Heart right ventricle (tissue), 16 donors: ENCODE measurements at regions of chr1 and their contacts with region 1.

Region 1: GRCh38 chr1:94463765-94464330 is 45.7 kb downstream of the ABCD3 start:
- DNase-seq: peak in 1 of 2 donors; percentile 19
- ATAC-seq: peak; percentile 65 to 82 (median 70)
- H3K4me3 ChIP-seq: no peak overlapping the region
- H3K27ac ChIP-seq: no peak overlapping the region
- H3K4me1 ChIP-seq: peaks cover 0 to 15% (median 10%) of the 10 kb centered on the region in 9 donors
- H3K27me3 ChIP-seq: no peaks in the 10 kb centered on the region
- CTCF ChIP-seq: peak; percentile 22 to 71 (median 57)

Region 2: GRCh38 chr1:94025383-94026340 is 438.2 kb before region 1 on chr1:
- intact Hi-C with region 1: loop called in 3 of 10 experiments (anchors 10 kb)
- DNase-seq: peak in 1 of 2 donors; percentile 58
- ATAC-seq: peak in 5 of 8 donors; percentile 39 to 72 (median 56)
- H3K4me3 ChIP-seq: peak overlapping the region in 1 of 10 donors; percentile 8
- H3K27ac ChIP-seq: peak overlapping the region in 1 of 10 donors; percentile 11
- H3K4me1 ChIP-seq: peaks cover 0 to 34% (median 8%) of the 10 kb centered on the region in 9 donors
- H3K27me3 ChIP-seq: no peaks in the 10 kb centered on the region
- CTCF ChIP-seq: peak; percentile 70 to 90 (median 81)

Region 3: DNA sequence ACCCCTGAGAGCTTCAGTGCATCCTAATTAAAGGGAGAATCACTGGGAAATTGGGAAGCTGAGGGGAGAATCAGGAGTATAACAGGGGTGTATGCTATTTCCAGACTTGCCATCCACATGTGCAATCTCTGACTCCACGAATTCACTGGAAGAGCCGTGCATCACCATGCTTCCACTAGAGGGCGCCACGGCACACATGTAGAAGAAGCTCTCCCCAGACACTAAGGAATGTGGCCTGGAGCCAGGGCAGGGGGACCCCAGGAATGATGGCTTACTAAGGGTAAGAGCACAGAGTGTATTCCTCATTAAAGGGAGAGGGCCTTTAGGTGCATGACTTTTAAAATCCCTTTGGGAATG is 424.4 kb before region 1 on chr1:
- intact Hi-C with region 1: loop called in 1 of 10 experiments (anchors 10 kb)
- DNase-seq: peak; percentile 73 to 76
- ATAC-seq: peak in 7 of 8 donors; percentile 17 to 58 (median 33)
- H3K4me3 ChIP-seq: no peak overlapping the region
- H3K27ac ChIP-seq: peak overlapping the region; percentile 19 to 83 (median 74)
- H3K4me1 ChIP-seq: peaks cover 3 to 58% (median 42%) of the 10 kb centered on the region in 9 donors
- H3K27me3 ChIP-seq: peaks cover 0 to 18% (median 0%) of the 10 kb centered on the region in 7 donors
- CTCF ChIP-seq: peak; percentile 72 to 95 (median 85)

Region 4: GRCh38 chr1:94335950-94336349 is 127.9 kb before region 1 on chr1:
- intact Hi-C with region 1: loop called in 6 of 10 experiments (anchors 5 to 10 kb)
- DNase-seq: peak; percentile 18 to 86
- ATAC-seq: peak; percentile 73 to 94 (median 90)
- H3K4me3 ChIP-seq: peak overlapping the region in 1 of 10 donors; percentile 14
- H3K27ac ChIP-seq: peak overlapping the region in 5 of 10 donors; percentile 7 to 77 (median 69)
- H3K4me1 ChIP-seq: peaks cover 0 to 30% (median 16%) of the 10 kb centered on the region in 9 donors
- H3K27me3 ChIP-seq: no peaks in the 10 kb centered on the region
- CTCF ChIP-seq: peak; percentile 75 to 99 (median 88)

Region 5: DNA sequence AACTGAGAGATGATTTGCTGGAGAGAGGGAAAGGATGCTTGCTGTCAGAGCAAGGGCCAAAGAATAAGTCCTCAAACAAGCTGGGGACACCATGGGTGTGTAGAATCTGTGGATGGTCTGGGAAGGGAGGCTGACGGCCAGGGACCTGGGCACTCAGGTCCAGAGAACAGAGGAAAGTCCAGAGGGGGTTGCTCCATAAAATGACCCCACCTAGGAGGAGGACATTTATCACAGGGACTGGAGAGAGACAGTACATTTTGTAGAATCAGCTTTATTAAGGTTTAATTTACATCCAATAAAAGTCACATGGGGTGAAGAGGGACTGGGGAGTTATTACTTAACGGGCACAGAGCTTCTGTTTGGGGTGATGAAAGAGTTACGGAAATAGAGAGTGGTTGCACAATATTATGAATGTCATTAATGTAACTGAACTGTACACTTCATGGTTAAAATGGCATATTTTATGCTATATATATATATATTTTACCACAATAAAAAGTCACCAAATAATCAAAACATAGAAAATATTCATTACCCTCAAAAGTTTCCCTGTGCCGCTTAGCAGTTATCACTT is 118.6 kb before region 1 on chr1:
- intact Hi-C with region 1: loop called in 3 of 10 experiments (anchors 5 to 10 kb)
- DNase-seq: no peak
- ATAC-seq: no peak
- H3K4me3 ChIP-seq: no peak overlapping the region
- H3K27ac ChIP-seq: no peak overlapping the region
- H3K4me1 ChIP-seq: peaks cover 0 to 3% (median 0%) of the 10 kb centered on the region in 9 donors
- H3K27me3 ChIP-seq: no peaks in the 10 kb centered on the region
- CTCF ChIP-seq: no peak

Region 6: GRCh38 chr1:94417978-94418663 is 45.7 kb before region 1 on chr1 and contains the start of gene ABCD3:
- intact Hi-C with region 1: loop called in 2 of 10 experiments (anchors 5 kb)
- DNase-seq: peak; percentile 97 to 98
- ATAC-seq: peak; percentile 96 to 99 (median 98)
- H3K4me3 ChIP-seq: peak within 1 kb of the TSS; percentile 59 to 98 (median 93)
- H3K27ac ChIP-seq: peak within 1 kb of the TSS; percentile 81 to 97 (median 92)
- H3K4me1 ChIP-seq: peaks cover 0 to 50% (median 41%) of the 10 kb centered on the region in 9 donors
- H3K27me3 ChIP-seq: peaks cover 0 to 4% (median 0%) of the 10 kb centered on the region in 7 donors
- CTCF ChIP-seq: peak in 1 of 9 donors; percentile 6
- total RNA-seq, gene ABCD3: 49.0 to 90.0 (median 60.7) TPM

Region 7: DNA sequence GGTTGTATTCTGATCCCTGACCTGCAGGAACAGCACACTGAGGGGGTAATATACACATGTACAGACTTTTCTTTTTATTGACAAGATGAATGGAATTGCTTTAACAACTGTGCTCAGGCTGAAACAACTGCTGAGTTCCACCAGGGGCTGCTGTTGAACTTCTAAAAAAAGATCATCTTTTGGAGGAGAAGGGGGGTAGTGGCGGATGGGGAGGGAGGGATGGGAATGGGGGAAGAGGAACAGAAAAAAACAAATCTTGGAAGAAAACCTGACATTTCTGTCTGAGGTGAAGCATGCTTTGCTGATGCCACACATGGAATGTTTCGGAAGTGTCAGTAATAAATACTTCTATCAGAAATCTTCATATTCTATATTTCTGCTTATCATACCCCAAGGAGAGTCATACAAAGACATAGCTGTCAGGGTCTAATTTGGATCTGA is 845.2 kb after region 1 on chr1:
- intact Hi-C with region 1: no loop called
- DNase-seq: peak in 1 of 2 donors; percentile 20
- ATAC-seq: peak in 5 of 8 donors; percentile 55 to 81 (median 58)
- H3K4me3 ChIP-seq: no peak overlapping the region
- H3K27ac ChIP-seq: no peak overlapping the region
- H3K4me1 ChIP-seq: no peaks in the 10 kb centered on the region
- H3K27me3 ChIP-seq: peaks cover 0 to 28% (median 3%) of the 10 kb centered on the region in 7 donors
- CTCF ChIP-seq: peak; percentile 14 to 68 (median 52)